PC-9 (cell line): ENCODE measurements at regions of chr12 and their contacts with region 1.

Region 1: GRCh38 chr12:6688999-6689882 is at the start of gene ZNF384:
- DNase-seq: peak; percentile 98 to 99
- H3K4me3 ChIP-seq: peak within 1 kb of the TSS; percentile 72
- H3K27ac ChIP-seq: peak within 1 kb of the TSS; percentile 84
- H3K4me1 ChIP-seq: peaks cover 27% of the 10 kb centered on the region
- H3K27me3 ChIP-seq: no peaks in the 10 kb centered on the region
- CTCF ChIP-seq: no peak
- total RNA-seq, gene ZNF384: 74.3 and 106 TPM in 2 replicates

Region 2: DNA sequence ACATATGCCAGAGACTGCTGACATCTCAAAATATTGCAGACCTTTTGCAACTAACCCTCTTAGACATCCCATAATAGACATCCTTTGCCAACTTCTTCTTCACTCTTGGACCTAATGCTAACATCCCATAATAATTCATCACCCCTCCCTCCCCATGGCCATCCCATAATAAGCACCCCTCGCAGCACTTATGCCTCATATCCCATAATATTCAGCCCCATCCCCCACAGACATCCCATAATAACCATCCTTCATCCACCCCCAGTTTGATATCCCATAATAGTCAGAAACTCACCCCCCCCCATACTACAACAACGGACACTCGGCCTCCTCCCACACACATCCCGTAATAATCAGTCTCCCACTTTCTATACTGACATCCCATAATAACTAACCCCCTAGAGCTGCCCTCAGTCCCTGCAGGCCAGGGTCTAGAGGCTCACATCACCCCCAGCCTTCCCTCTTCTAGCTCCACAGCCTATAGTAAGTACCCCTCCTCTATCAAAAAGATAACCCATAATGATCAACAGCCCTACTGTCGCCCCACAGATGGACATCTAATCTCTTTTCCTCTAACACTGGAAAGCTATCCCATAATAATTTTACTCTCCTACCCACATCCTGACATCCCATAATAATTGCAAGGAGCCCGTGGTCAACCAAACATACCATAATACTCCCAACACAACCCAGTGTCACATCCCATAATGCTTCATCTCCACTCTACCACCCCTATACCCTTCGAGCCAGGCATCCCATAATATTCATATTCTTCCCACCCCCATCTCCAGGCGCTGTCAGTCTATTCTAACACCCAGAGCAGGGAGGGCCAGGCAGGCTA is 81.3 kb before region 1 on chr12:
- CTCF ChIA-PET with region 1: no interaction called
- POLR2A ChIA-PET with region 1: interaction called, 60 read pairs
- intact Hi-C with region 1: loop called (anchors 1 kb)
- DNase-seq: peak; percentile 75 to 83
- H3K4me3 ChIP-seq: no peak overlapping the region
- H3K27ac ChIP-seq: 0 out of 2 replicates have a peak overlapping the region, but pooled peaks have one; percentile 4
- H3K4me1 ChIP-seq: peaks cover 49% of the 10 kb centered on the region
- H3K27me3 ChIP-seq: no peaks in the 10 kb centered on the region
- CTCF ChIP-seq: no peak

Region 3: GRCh38 chr12:6662906-6663742 is 26.1 kb before region 1 on chr12 and contains the start of gene ING4:
- CTCF ChIA-PET with region 1: interaction called, 4 read pairs
- POLR2A ChIA-PET with region 1: interaction called, 3 read pairs
- intact Hi-C with region 1: loop called (anchors 1 kb)
- DNase-seq: peak; percentile 98 to 99
- H3K4me3 ChIP-seq: peak within 1 kb of the TSS; percentile 63
- H3K27ac ChIP-seq: peak within 1 kb of the TSS; percentile 58
- H3K4me1 ChIP-seq: peaks cover 8% of the 10 kb centered on the region
- H3K27me3 ChIP-seq: no peaks in the 10 kb centered on the region
- CTCF ChIP-seq: no peak
- total RNA-seq, gene ING4: 87.6 and 88.7 TPM in 2 replicates

Region 4: DNA sequence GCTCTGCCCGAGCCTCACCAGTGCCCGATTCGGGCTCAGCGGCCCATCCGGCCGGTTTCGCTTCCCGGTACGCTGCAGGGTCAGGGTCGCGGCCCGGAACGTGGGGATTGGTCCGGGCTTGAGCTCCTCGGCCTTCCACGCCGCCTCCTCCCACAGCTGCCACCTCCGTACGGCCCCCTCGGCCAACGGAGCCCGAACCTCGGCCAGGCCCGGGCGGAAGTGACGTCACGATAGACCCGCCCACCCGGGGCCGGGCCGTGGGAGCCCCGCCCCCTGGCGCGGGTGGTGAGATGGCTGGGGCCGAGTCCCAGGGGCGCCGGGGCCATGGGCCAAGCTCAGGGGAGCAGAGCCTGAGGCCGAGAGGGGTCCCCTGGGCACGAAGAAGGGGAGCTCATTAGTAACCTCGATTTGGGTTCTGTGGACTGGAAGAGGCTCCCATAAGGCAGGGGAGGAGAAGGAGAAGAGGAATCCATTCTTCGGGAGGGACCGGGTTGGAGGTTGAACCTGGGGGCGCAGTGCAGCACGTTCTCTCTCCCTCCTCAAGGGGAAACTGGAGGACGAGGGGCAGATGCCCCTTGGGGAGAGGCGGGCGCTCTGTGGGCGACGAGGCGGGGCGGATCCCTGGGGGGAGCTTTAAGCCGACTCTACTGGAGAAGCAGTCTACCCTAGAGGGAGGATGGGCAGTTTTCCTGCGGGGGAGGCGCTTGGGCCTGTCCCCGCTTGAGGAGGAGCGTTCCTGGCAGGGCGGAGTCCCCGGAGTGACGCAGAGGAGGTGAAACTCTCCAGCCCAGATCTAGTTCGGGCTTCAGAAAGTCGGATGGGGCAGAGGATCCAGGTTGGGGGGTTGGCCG is 63.9 kb after region 1 on chr12 and contains the start of gene MLF2:
- CTCF ChIA-PET with region 1: interaction called, 11 read pairs
- POLR2A ChIA-PET with region 1: interaction called, 63 read pairs
- intact Hi-C with region 1: loop called (anchors 2 kb)
- DNase-seq: peak; percentile 95 to 100
- H3K4me3 ChIP-seq: peak within 1 kb of the TSS; percentile 77
- H3K27ac ChIP-seq: peak within 1 kb of the TSS; percentile 83
- H3K4me1 ChIP-seq: peaks cover 16% of the 10 kb centered on the region
- H3K27me3 ChIP-seq: no peaks in the 10 kb centered on the region
- CTCF ChIP-seq: no peak; the same call in 1 of the 2 replicates
- total RNA-seq, gene MLF2: 349 and 379 TPM in 2 replicates

Region 5: DNA sequence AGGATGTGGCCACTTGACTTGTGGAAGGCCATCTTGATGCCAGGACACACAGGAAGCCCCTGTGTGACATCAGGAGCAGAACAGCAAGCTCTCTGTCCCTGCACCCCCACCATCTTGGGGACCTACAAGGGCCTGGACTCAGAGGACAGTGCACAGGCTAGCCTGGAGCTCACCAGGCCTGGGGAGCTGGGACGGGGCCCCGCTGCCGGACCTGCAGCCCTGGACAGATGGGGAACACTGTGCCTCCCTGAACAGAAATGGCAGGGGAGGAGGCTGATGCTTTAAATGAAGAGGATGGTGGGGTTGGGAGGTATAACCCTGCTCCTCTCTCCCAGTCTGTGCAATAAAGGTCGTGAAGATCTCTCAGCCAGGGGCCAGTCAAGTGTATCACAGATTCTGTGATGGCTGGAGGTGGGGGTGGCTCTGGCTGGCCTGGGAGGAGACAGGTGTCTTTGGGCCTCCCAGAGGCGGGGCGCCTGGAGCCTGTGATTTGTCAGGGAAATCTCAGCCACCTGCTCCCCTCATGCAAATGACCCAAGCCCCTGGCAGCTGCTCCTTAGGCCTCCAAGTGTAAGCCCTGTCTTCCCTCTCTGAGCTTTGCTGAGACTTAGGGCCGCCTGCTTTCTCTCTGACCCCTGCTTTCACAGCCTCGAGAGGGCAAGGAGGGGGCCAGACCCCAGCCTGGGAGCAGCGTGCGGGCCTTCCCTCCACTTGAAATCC is 150.4 kb after region 1 on chr12:
- CTCF ChIA-PET with region 1: interaction called, 3 read pairs
- POLR2A ChIA-PET with region 1: interaction called, 10 read pairs
- intact Hi-C with region 1: no loop called
- DNase-seq: peak; percentile 58 to 60
- H3K4me3 ChIP-seq: no peak overlapping the region
- H3K27ac ChIP-seq: no peak overlapping the region
- H3K4me1 ChIP-seq: no peaks in the 10 kb centered on the region
- H3K27me3 ChIP-seq: no peaks in the 10 kb centered on the region; the same call in 1 of the 2 replicates
- CTCF ChIP-seq: peak; percentile 56; the same call in 1 of the 2 replicates

Region 6: DNA sequence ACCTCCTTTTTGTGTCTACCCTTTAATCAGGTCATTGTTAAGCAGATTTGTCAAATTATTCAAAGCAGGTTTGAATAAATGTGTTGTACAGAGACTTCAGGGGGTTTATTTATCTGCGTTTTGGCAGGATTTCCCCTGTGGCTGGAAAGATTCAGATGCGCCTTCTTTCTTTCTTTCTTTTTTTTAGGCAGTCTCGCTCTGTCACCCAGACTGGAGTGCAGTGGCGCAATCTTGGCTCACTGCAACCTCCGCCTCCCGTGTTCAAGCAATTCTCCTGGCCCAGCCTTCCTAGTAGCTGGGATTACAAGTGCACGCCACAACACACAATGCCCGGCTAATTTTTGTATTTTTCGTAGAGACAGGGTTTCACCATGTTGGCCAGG is 1069.5 kb after region 1 on chr12:
- CTCF ChIA-PET with region 1: no interaction called
- POLR2A ChIA-PET with region 1: interaction called, 15 read pairs
- intact Hi-C with region 1: no loop called
- DNase-seq: no peak
- H3K4me3 ChIP-seq: no peak overlapping the region
- H3K27ac ChIP-seq: no peak overlapping the region
- H3K4me1 ChIP-seq: no peaks in the 10 kb centered on the region
- H3K27me3 ChIP-seq: no peaks in the 10 kb centered on the region
- CTCF ChIP-seq: no peak